Vagina (tissue), 2 donors: ENCODE measurements at regions of chr7 and their contacts with region 1.

Region 1: GRCh38 chr7:135645296-135645904 is 16.9 kb upstream of the STMP1 start:
- DNase-seq: no peak
- H3K4me3 ChIP-seq: no peak overlapping the region
- H3K27ac ChIP-seq: no peak overlapping the region
- H3K4me1 ChIP-seq: no peaks in the 10 kb centered on the region
- H3K27me3 ChIP-seq: no peaks in the 10 kb centered on the region
- CTCF ChIP-seq: peak in 2 of 3 experiments; percentile 47 to 54
- POLR2A ChIP-seq: no peak

Region 2: GRCh38 chr7:134491963-134492362 is 1153.4 kb before region 1 on chr7:
- intact Hi-C with region 1: no loop called
- DNase-seq: no peak
- H3K4me3 ChIP-seq: no peak overlapping the region
- H3K27ac ChIP-seq: no peak overlapping the region
- H3K4me1 ChIP-seq: no peaks in the 10 kb centered on the region
- H3K27me3 ChIP-seq: no peaks in the 10 kb centered on the region
- CTCF ChIP-seq: no peak
- POLR2A ChIP-seq: no peak

Region 3: GRCh38 chr7:135274495-135275268 is 370.7 kb before region 1 on chr7:
- intact Hi-C with region 1: loop called (anchors 10 kb)
- DNase-seq: peak; percentile 71 to 87
- H3K4me3 ChIP-seq: no peak overlapping the region
- H3K27ac ChIP-seq: no peak overlapping the region
- H3K4me1 ChIP-seq: no peaks in the 10 kb centered on the region
- H3K27me3 ChIP-seq: no peaks in the 10 kb centered on the region
- CTCF ChIP-seq: peak; percentile 67 to 85 (median 77)
- POLR2A ChIP-seq: no peak

Region 4: DNA sequence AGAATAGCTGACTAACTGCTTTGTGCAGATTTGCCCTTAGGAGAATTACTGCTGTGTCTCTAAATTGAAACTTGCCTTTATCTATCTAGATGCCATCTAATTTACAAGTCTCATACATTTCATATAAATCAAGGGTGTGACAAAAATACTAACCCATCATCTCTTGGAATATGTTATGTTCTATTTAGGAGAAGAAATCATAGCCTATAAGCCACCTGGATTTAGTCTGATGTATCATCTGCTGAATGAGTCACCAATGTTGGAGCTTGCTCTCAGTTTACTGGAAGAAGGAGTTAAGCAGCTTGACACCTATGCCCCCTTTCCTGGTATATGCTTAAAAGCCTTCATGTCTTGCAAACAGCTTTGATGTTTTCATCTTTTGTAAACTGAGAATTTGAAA is 44.2 kb before region 1 on chr7:
- intact Hi-C with region 1: no loop called
- DNase-seq: no peak
- H3K4me3 ChIP-seq: no peak overlapping the region
- H3K27ac ChIP-seq: no peak overlapping the region
- H3K4me1 ChIP-seq: peaks cover 9% of the 10 kb centered on the region
- H3K27me3 ChIP-seq: no peaks in the 10 kb centered on the region
- CTCF ChIP-seq: no peak
- POLR2A ChIP-seq: no peak

Region 5: GRCh38 chr7:135862586-135863340 is 217.4 kb after region 1 on chr7:
- intact Hi-C with region 1: no loop called
- DNase-seq: no peak
- H3K4me3 ChIP-seq: no peak overlapping the region
- H3K27ac ChIP-seq: no peak overlapping the region
- H3K4me1 ChIP-seq: no peaks in the 10 kb centered on the region
- H3K27me3 ChIP-seq: no peaks in the 10 kb centered on the region
- CTCF ChIP-seq: no peak
- POLR2A ChIP-seq: no peak